Posterior cingulate gyrus (tissue), 11 donors: ENCODE measurements at regions of chr1 and their contacts with region 1.

Region 1: GRCh38 chr1:177181631-177182291 is 11.0 kb downstream of the BRINP2 start:
- DNase-seq: peak; percentile 55 to 95 (median 75)

Region 2: DNA sequence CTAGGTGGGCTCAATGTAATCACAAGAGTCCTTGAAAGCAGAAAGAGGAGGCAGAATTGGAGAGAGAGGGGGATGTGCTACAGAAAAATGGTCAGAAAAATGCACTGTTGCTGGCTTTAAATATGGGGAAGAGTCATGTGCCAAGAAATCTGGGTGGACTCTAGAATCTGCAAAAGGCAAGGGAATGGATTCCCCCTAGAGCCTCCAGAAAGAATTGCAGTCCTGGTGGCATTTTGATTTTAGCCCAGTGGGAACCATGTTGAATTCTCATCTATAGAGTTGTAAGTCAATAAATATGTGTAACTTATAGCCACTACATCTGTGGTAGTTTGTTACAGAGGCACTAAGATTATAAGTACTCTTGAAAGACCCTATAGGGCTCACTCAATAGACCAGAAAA is 227.5 kb before region 1 on chr1:
- intact Hi-C with region 1: no loop called
- DNase-seq: no peak

Region 3: DNA sequence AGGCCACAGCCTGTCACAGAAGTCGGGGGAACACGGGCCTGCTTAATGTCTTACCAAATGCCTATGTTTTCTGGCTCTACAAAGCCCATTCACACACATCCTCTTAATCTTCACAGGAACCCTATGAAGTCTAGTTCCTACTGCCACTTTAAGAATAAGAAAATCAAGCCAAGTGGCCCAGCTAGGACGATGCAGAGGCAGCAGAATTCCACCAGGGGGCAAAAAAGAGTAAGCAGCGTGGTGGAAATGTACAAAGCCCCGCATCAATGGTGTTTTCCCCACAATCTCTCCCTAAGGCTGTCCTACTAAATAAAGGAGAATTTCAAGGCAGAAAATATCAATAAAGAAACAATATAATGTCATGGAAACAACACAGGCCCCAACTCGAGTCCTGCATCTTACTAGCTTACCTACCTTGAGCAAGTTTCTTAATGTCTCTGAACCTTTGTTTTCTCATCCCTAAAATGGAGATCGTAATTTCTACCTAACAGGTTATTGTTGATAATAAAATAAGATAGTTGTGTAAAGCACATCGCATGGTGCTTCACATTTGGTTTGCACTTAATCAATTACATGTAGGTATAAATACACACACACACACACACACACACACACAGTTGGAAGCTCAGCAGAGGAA is 766.7 kb after region 1 on chr1:
- intact Hi-C with region 1: loop called (anchors 10 kb)
- DNase-seq: peak in 9 of 10 donors; percentile 35 to 94 (median 70)